Naive thymus-derived CD4-positive, alpha-beta T cell (primary cell): ENCODE measurements at regions of chr11 and their contacts with region 1.

Region 1: GRCh38 chr11:90204832-90205646 is 17.8 kb downstream of the CHORDC1 start:
- DNase-seq: peak in 6 of 9 donors; percentile 17 to 57 (median 48)
- ATAC-seq: peak; percentile 88
- H3K4me3 ChIP-seq: no peak overlapping the region
- H3K4me3 Mint-ChIP-seq: no peak overlapping the region
- H3K27ac ChIP-seq: no peak overlapping the region
- H3K27ac Mint-ChIP-seq: peak overlapping the region in 8 of 9 donors; percentile 27 to 77 (median 54)
- H3K4me1 ChIP-seq: no peaks in the 10 kb centered on the region
- H3K4me1 Mint-ChIP-seq: peaks cover 4 to 34% (median 24%) of the 10 kb centered on the region in 7 donors
- H3K27me3 ChIP-seq: no peaks in the 10 kb centered on the region
- H3K27me3 Mint-ChIP-seq: no peaks in the 10 kb centered on the region

Region 2: GRCh38 chr11:90216611-90217010 is 11.6 kb after region 1 on chr11:
- CTCF ChIA-PET with region 1: interaction called, 11 read pairs
- POLR2A ChIA-PET with region 1: no interaction called
- intact Hi-C with region 1: loop called in 1 of 2 experiments (anchors 1 kb)
- DNase-seq: no peak
- ATAC-seq: no peak
- H3K4me3 ChIP-seq: no peak overlapping the region
- H3K4me3 Mint-ChIP-seq: peak overlapping the region in 5 of 10 donors; percentile 11 to 91 (median 48)
- H3K27ac ChIP-seq: no peak overlapping the region
- H3K27ac Mint-ChIP-seq: peak overlapping the region in 7 of 9 donors; percentile 8 to 76 (median 51)
- H3K4me1 ChIP-seq: peaks cover 23 to 27% of the 10 kb centered on the region in 2 donors
- H3K4me1 Mint-ChIP-seq: peaks cover 38 to 81% (median 60%) of the 10 kb centered on the region in 7 donors
- H3K27me3 ChIP-seq: no peaks in the 10 kb centered on the region
- H3K27me3 Mint-ChIP-seq: no peaks in the 10 kb centered on the region

Region 3: DNA sequence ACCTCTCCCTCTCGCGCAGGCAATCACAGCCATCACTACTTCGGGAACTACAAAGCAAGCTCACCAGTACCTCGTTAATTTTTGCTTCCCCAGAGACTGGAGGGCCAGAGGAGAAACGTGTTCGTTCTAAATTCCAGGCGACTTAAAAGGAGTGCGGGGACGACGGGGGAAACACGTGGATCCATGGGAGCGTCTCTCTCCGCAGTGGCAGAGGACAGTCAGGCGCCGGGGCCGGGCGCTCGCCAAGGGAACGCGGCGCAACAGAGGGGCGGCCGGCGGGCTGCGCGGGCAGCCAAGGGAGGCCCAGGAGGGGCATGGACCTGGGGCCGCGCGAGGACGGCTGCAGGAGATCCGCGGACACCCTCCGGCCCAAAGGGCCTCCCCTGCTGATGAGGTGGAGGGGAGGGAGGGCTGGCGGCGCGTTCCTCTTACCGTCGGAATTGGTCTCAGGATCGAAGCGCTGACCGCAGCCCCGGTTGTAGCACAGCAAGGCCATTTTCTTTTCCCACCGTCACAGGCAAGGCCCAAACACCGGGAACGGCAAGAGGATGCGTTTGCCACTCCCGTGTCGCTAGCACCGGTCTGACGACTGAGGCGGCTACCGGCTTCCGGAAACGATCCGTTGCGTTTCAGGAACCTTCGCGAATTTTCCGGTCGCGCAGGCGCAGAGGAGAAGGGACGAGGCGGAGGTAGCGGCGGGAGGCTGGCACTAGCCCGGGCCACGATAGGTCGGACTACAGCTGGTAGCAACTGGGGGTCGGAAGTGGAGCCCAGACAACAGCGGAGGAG is 17.6 kb after region 1 on chr11 and contains the start of gene CHORDC1:
- CTCF ChIA-PET with region 1: interaction called, 3 read pairs
- POLR2A ChIA-PET with region 1: no interaction called
- intact Hi-C with region 1: loop called (anchors 1 kb)
- DNase-seq: peak; percentile 80 to 96 (median 87)
- ATAC-seq: peak; percentile 91
- H3K4me3 ChIP-seq: peak within 1 kb of the TSS; percentile 74
- H3K4me3 Mint-ChIP-seq: peak within 1 kb of the TSS; percentile 91 to 99 (median 98)
- H3K27ac ChIP-seq: peak within 1 kb of the TSS; percentile 86
- H3K27ac Mint-ChIP-seq: peak within 1 kb of the TSS; percentile 91 to 96 (median 95)
- H3K4me1 ChIP-seq: peaks cover 23 to 25% of the 10 kb centered on the region in 2 donors
- H3K4me1 Mint-ChIP-seq: peaks cover 42 to 76% (median 55%) of the 10 kb centered on the region in 7 donors
- H3K27me3 ChIP-seq: no peaks in the 10 kb centered on the region
- H3K27me3 Mint-ChIP-seq: no peaks in the 10 kb centered on the region
- total RNA-seq, gene CHORDC1: 64.0 to 77.3 (median 66.5) TPM

Region 4: DNA sequence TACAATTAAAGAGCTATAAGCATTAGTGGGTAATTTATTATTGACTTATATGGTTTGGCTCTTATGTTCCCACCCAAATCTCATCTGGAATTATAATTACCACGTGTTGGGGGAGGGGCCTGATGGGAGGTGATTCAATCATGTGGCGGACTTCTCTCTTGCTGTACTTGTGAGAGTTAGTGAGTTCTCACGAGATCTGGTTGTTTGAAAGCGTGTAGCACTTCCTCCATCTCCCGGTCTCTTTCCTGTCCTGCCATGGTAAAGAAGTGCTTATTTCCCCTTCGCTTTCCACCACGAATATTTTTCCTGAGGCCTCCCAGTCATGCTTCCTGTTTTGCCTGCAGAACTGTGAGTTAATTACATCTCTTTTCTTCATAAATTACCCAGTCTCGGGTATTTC is 45.9 kb after region 1 on chr11:
- CTCF ChIA-PET with region 1: interaction called, 3 read pairs
- POLR2A ChIA-PET with region 1: no interaction called
- intact Hi-C with region 1: loop called in 1 of 2 experiments (anchors 1 kb)
- DNase-seq: peak in 1 of 9 donors; percentile 1
- ATAC-seq: peak; percentile 22
- H3K4me3 ChIP-seq: no peak overlapping the region
- H3K4me3 Mint-ChIP-seq: peak overlapping the region; percentile 28 to 89 (median 75)
- H3K27ac ChIP-seq: no peak overlapping the region
- H3K27ac Mint-ChIP-seq: peak overlapping the region in 3 of 9 donors; percentile 21 to 80 (median 31)
- H3K4me1 ChIP-seq: no peaks in the 10 kb centered on the region
- H3K4me1 Mint-ChIP-seq: peaks cover 5 to 20% (median 15%) of the 10 kb centered on the region in 7 donors
- H3K27me3 ChIP-seq: no peaks in the 10 kb centered on the region
- H3K27me3 Mint-ChIP-seq: peaks cover 0 to 8% (median 4%) of the 10 kb centered on the region in 5 donors

Region 5: DNA sequence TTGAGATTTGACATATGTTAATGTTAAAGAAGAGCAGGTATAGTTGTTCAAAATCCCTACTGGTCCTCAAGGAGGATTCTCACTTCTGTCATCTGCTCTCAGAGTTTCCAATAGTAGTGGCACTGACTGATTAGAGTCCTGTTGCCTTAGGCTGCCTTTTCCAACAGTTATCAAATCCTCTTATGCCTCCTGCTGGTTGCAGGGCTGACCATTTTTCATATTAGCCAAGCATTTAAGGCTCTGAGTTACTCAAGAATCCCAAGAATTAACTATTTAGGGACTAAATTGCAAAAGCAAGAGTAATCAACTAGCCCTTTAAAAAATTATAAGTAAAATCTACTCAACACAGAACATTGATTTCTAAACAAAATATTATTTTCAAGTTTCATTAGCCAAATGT is 229.8 kb after region 1 on chr11:
- CTCF ChIA-PET with region 1: no interaction called
- POLR2A ChIA-PET with region 1: no interaction called
- intact Hi-C with region 1: loop called in 1 of 2 experiments (anchors 2 kb)
- DNase-seq: no peak
- ATAC-seq: no peak
- H3K4me3 ChIP-seq: no peak overlapping the region
- H3K4me3 Mint-ChIP-seq: no peak overlapping the region
- H3K27ac ChIP-seq: no peak overlapping the region
- H3K27ac Mint-ChIP-seq: no peak overlapping the region
- H3K4me1 ChIP-seq: no peaks in the 10 kb centered on the region
- H3K4me1 Mint-ChIP-seq: no peaks in the 10 kb centered on the region
- H3K27me3 ChIP-seq: no peaks in the 10 kb centered on the region
- H3K27me3 Mint-ChIP-seq: peaks cover 0 to 5% (median 3%) of the 10 kb centered on the region in 5 donors

Region 6: GRCh38 chr11:90453525-90453924 is 248.5 kb after region 1 on chr11:
- CTCF ChIA-PET with region 1: no interaction called
- POLR2A ChIA-PET with region 1: no interaction called
- intact Hi-C with region 1: loop called in 1 of 2 experiments (anchors 2 kb)
- DNase-seq: no peak
- ATAC-seq: no peak
- H3K4me3 ChIP-seq: no peak overlapping the region
- H3K4me3 Mint-ChIP-seq: no peak overlapping the region
- H3K27ac ChIP-seq: no peak overlapping the region
- H3K27ac Mint-ChIP-seq: no peak overlapping the region
- H3K4me1 ChIP-seq: no peaks in the 10 kb centered on the region
- H3K4me1 Mint-ChIP-seq: no peaks in the 10 kb centered on the region
- H3K27me3 ChIP-seq: no peaks in the 10 kb centered on the region
- H3K27me3 Mint-ChIP-seq: peaks cover 0 to 5% (median 0%) of the 10 kb centered on the region in 5 donors

Region 7: GRCh38 chr11:91248199-91248807 is 1043.3 kb after region 1 on chr11:
- CTCF ChIA-PET with region 1: no interaction called
- POLR2A ChIA-PET with region 1: no interaction called
- intact Hi-C with region 1: loop called in 1 of 2 experiments (anchors 5 kb)
- DNase-seq: no peak
- ATAC-seq: no peak
- H3K4me3 ChIP-seq: no peak overlapping the region
- H3K4me3 Mint-ChIP-seq: no peak overlapping the region
- H3K27ac ChIP-seq: no peak overlapping the region
- H3K27ac Mint-ChIP-seq: no peak overlapping the region
- H3K4me1 ChIP-seq: no peaks in the 10 kb centered on the region
- H3K4me1 Mint-ChIP-seq: no peaks in the 10 kb centered on the region
- H3K27me3 ChIP-seq: no peaks in the 10 kb centered on the region
- H3K27me3 Mint-ChIP-seq: no peaks in the 10 kb centered on the region